Naive thymus-derived CD8-positive, alpha-beta T cell (primary cell): ENCODE measurements at regions of chr7 and their contacts with region 1.

Region 1: DNA sequence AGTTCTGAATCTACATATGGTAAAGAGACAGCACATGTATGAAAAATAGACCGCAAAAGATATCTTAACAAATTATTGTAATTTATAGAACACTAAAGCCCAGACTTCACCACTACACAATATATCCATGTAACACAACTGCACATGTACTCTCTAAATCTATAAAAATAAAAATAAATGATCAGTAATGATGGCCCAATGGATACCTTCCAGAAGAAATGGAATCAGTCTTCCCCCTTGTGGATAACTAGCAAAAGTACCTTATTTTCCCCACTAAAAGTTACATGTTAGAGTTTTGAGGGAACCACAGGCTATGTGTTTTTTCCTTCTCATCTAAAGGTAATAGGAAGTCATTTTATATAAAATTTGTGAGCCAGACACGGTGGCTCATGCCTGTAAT is 25.7 kb downstream of the C7orf25 start:
- DNase-seq: no peak
- ATAC-seq: no peak
- H3K4me3 Mint-ChIP-seq: peak overlapping the region in 1 of 10 donors; percentile 4
- H3K27ac Mint-ChIP-seq: peak overlapping the region in 2 of 10 donors; percentile 14 to 52
- H3K4me1 Mint-ChIP-seq: peaks cover 18 to 24% (median 23%) of the 10 kb centered on the region in 4 donors
- H3K27me3 Mint-ChIP-seq: no peaks in the 10 kb centered on the region

Region 2: GRCh38 chr7:42805622-42806021 is 80.5 kb before region 1 on chr7:
- POLR2A ChIA-PET with region 1: no interaction called
- DNase-seq: no peak
- ATAC-seq: no peak
- H3K4me3 Mint-ChIP-seq: no peak overlapping the region
- H3K27ac Mint-ChIP-seq: no peak overlapping the region
- H3K4me1 Mint-ChIP-seq: no peaks in the 10 kb centered on the region
- H3K27me3 Mint-ChIP-seq: peaks cover 12 to 45% (median 24%) of the 10 kb centered on the region in 5 donors

Region 3: DNA sequence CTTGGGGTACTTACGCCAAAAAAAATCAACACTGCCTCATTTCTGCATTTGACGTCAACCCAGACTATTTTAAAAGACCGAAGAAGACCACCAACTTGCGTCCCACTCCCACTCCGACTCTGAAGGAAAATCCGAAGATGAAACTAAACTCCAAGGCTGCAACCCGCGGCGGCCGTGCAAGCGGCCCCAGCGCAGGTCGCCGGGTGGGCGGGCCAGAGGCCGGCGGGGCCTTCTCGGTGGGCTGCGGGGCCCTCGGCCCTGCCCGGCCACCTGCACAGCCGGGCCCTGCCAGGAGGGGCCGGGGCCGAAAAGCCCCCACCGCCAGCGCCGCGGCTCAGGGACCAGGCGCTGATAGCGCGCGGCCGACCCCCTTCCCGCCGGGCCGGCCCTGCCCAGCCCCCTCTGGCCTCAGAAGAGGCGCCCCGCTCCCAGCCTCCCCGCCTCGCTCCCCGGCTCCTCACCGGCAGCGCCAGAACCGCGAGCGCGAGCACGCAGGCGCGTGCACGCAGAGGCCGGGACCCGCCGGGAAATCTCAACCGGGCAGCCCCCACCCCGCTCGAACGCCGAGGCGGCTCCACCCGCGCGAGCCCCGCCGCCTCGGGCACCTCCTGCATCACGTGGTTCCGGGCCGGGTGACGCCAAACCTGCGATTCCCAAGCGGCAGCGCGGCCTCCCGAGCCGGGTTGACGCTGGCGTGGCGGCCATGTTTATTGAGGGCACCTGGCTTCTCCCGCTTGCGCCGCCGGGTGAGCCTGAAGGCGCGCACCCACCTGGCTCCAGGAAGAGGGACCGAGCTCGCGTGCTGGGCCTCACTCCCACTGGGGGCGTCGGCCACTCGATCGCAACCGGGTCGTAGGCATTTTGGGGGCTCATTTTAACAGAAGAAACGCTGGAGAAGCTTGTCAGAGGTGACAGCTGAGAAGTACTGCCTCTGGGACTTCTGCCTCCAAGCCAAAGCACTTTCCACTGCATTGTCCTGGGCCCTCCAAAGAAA is 25.6 kb after region 1 on chr7 and contains the start of gene C7orf25:
- POLR2A ChIA-PET with region 1: interaction called, 14 read pairs
- DNase-seq: peak; percentile 93 to 97 (median 95)
- ATAC-seq: peak; percentile 88 to 93
- H3K4me3 Mint-ChIP-seq: peak within 1 kb of the TSS; percentile 84 to 97 (median 93)
- H3K27ac Mint-ChIP-seq: peak within 1 kb of the TSS; percentile 89 to 97 (median 95)
- H3K4me1 Mint-ChIP-seq: peaks cover 37 to 76% (median 58%) of the 10 kb centered on the region in 4 donors
- H3K27me3 Mint-ChIP-seq: no peaks in the 10 kb centered on the region
- polyA plus RNA-seq, gene C7orf25: 1.9 to 3.3 (median 3.0) TPM

Region 4: GRCh38 chr7:42931834-42932651 is 45.9 kb after region 1 on chr7 and contains the starts of genes MRPL32 and PSMA2:
- POLR2A ChIA-PET with region 1: interaction called, 22 read pairs
- DNase-seq: peak; percentile 81 to 97 (median 94)
- ATAC-seq: peak; percentile 99
- H3K4me3 Mint-ChIP-seq: peak within 1 kb of the TSS; percentile 89 to 100 (median 99)
- H3K27ac Mint-ChIP-seq: peak within 1 kb of the TSS; percentile 96 to 99 (median 98)
- H3K4me1 Mint-ChIP-seq: peaks cover 24 to 81% (median 63%) of the 10 kb centered on the region in 4 donors
- H3K27me3 Mint-ChIP-seq: no peaks in the 10 kb centered on the region
- polyA plus RNA-seq, gene MRPL32: 27.6 to 43.5 (median 30.7) TPM
- polyA plus RNA-seq, gene PSMA2: 199 to 265 (median 216) TPM